Calu3 (cell line): ENCODE measurements at regions of chr5 and their contacts with region 1.

Region 1: DNA sequence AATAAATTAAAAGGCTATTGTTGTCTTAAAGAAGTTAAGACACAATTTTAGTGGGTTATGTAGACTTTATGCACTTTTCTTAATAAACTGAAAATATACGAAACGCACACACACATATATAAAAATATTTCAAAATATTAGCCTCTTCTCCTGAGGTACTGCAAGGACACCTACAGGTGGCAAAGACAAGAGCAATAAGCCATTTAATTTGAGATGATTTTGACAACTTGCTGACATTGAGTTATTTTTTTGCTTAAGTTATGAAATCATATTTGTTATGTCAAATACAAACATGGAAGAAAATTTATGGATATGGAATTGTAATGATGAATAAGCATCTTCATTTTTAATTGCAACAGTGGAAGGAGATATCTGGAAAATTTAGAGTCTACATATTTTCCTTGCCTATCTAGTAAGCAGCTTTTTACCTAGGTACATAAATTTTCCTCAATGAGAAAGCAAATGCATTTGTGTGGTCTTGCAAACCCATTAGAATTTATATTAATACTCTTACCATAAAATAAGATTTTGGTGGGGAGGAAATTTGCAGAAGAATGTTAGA is 301.6 kb downstream of the ISL1 start:
- DNase-seq: no peak
- H3K4me3 Mint-ChIP-seq: no peak overlapping the region
- H3K27ac Mint-ChIP-seq: no peak overlapping the region
- H3K4me1 Mint-ChIP-seq: no peaks in the 10 kb centered on the region
- H3K27me3 Mint-ChIP-seq: no peaks in the 10 kb centered on the region
- CTCF ChIP-seq: peak; percentile 39

Region 2: GRCh38 chr5:50814556-50814955 is 870.3 kb before region 1 on chr5:
- CTCF ChIA-PET with region 1: no interaction called
- intact Hi-C with region 1: no loop called
- DNase-seq: no peak
- H3K4me3 Mint-ChIP-seq: no peak overlapping the region
- H3K27ac Mint-ChIP-seq: no peak overlapping the region
- H3K4me1 Mint-ChIP-seq: no peaks in the 10 kb centered on the region
- H3K27me3 Mint-ChIP-seq: no peaks in the 10 kb centered on the region
- CTCF ChIP-seq: no peak

Region 3: DNA sequence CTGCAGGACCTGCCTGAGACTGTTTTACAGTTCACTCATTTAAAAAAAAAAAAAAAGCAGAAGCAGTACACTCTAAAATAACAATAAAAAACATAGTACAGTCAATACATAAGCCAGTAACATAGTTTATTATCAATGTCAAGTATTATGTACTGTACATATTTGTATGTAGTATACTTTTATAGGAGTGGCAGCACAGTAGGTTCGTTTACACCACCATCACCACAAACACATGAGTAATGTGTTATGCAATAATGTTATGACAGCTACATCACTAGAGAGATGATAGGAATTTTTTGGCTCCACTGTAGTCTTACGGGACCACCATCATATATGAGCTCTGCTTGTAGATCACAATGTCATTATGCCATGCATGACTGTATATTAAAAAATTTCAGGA is 161.1 kb after region 1 on chr5:
- CTCF ChIA-PET with region 1: interaction called, 3 read pairs
- intact Hi-C with region 1: loop called (anchors 10 kb)
- DNase-seq: no peak
- H3K4me3 Mint-ChIP-seq: no peak overlapping the region
- H3K27ac Mint-ChIP-seq: no peak overlapping the region
- H3K4me1 Mint-ChIP-seq: no peaks in the 10 kb centered on the region
- H3K27me3 Mint-ChIP-seq: no peaks in the 10 kb centered on the region
- CTCF ChIP-seq: no peak

Region 4: DNA sequence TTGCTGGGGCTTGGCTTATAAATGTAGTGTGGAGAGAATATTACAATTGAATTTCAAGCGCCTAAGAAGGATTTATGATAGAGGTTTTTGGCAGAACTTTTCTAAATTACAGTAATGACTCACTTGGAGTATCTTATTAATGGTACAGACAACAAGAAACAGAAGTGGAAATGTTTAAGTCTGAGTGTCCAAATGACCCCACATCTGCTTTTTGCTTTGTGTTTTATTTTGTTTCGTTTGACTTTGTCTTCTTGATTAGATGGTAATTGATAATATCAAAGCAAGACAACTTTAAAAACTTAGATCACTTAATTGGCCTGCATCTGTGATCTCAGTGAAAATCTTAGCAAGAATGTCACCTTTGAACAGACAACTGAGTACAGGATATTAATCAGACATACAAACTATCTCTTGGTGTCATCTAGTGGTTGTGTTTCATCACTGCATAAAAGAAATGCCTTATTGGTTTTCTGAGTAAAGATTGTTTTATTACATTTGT is 275.8 kb after region 1 on chr5:
- CTCF ChIA-PET with region 1: no interaction called
- intact Hi-C with region 1: loop called (anchors 10 kb)
- DNase-seq: no peak
- H3K4me3 Mint-ChIP-seq: no peak overlapping the region
- H3K27ac Mint-ChIP-seq: no peak overlapping the region
- H3K4me1 Mint-ChIP-seq: no peaks in the 10 kb centered on the region
- H3K27me3 Mint-ChIP-seq: no peaks in the 10 kb centered on the region
- CTCF ChIP-seq: no peak